ENCODE measurements at regions of chr12 and their contacts with region 1.

Region 1: DNA sequence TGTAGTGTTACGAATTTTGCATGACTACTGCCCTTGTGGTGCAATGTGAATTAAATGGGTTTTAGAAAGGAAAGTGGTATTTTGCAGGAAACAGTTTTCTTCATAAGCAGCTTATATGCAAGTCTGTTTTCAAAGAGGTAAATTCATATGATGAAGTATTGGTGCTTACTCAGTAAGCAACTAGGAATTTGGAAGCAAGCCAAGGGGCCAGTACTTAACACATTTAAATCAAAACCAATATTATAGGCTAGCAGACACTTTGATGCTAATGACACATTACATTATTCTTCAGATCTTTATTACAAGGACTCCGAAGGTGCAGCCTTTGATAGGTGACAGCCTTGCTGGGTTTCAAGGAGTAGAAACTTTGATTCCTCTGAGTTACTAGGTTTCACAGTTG is 23.1 kb downstream of the MGAT4C start:
- DNase-seq: peak; percentile 49
- H3K4me3 ChIP-seq: no peak overlapping the region
- H3K27ac ChIP-seq: no peak overlapping the region
- H3K4me1 ChIP-seq: peaks cover 32% of the 10 kb centered on the region
- H3K27me3 ChIP-seq: no peaks in the 10 kb centered on the region
- CTCF ChIP-seq: no peak
- POLR2A ChIP-seq: no peak

Region 2: GRCh38 chr12:85626001-85626781 is 606.9 kb before region 1 on chr12:
- CTCF ChIA-PET with region 1: no interaction called
- POLR2A ChIA-PET with region 1: no interaction called
- dilution Hi-C with region 1: no loop called
- intact Hi-C with region 1: loop called (anchors 2 kb)
- DNase-seq: peak; percentile 95
- H3K4me3 ChIP-seq: no peak overlapping the region
- H3K27ac ChIP-seq: peak overlapping the region; percentile 92
- H3K4me1 ChIP-seq: peaks cover 26% of the 10 kb centered on the region
- H3K27me3 ChIP-seq: no peaks in the 10 kb centered on the region
- CTCF ChIP-seq: no peak
- POLR2A ChIP-seq: peak; percentile 73

Region 3: GRCh38 chr12:85951823-85952222 is 281.3 kb before region 1 on chr12:
- CTCF ChIA-PET with region 1: no interaction called
- POLR2A ChIA-PET with region 1: no interaction called
- dilution Hi-C with region 1: no loop called
- intact Hi-C with region 1: loop called (anchors 1 kb)
- DNase-seq: peak; percentile 55
- H3K4me3 ChIP-seq: no peak overlapping the region
- H3K27ac ChIP-seq: no peak overlapping the region
- H3K4me1 ChIP-seq: peaks cover 4% of the 10 kb centered on the region
- H3K27me3 ChIP-seq: no peaks in the 10 kb centered on the region
- CTCF ChIP-seq: peak; percentile 17 to 25
- POLR2A ChIP-seq: no peak

Region 4: GRCh38 chr12:86193931-86194330 is 39.2 kb before region 1 on chr12:
- CTCF ChIA-PET with region 1: no interaction called
- POLR2A ChIA-PET with region 1: no interaction called
- dilution Hi-C with region 1: no loop called
- intact Hi-C with region 1: loop called (anchors 1 kb)
- DNase-seq: peak; percentile 59
- H3K4me3 ChIP-seq: no peak overlapping the region
- H3K27ac ChIP-seq: no peak overlapping the region
- H3K4me1 ChIP-seq: peaks cover 10% of the 10 kb centered on the region
- H3K27me3 ChIP-seq: no peaks in the 10 kb centered on the region
- CTCF ChIP-seq: no peak
- POLR2A ChIP-seq: no peak

Region 5: GRCh38 chr12:86249851-86250250 is 16.7 kb after region 1 on chr12:
- CTCF ChIA-PET with region 1: no interaction called
- POLR2A ChIA-PET with region 1: no interaction called
- dilution Hi-C with region 1: no loop called
- intact Hi-C with region 1: no loop called
- DNase-seq: no peak
- H3K4me3 ChIP-seq: no peak overlapping the region
- H3K27ac ChIP-seq: no peak overlapping the region
- H3K4me1 ChIP-seq: no peaks in the 10 kb centered on the region
- H3K27me3 ChIP-seq: no peaks in the 10 kb centered on the region
- CTCF ChIP-seq: no peak
- POLR2A ChIP-seq: no peak

Region 6: DNA sequence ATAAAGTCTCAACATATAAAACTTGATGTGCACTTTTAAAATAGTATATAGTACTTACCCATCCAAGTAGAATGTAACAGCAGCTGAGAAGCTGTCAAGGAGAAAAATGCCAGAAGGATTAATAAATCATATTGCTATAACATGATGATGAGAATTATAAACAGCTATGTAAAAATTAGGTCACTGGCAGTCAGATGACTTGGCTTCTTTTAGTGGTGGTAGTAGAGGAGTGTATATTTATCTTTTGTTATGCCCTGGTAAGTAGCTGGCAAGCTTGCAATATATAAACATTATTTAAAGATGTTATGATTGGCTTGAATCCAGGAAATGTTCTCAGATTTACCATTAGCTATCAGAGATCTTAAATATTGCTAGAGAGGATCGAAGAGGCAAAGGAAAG is 494.0 kb after region 1 on chr12:
- CTCF ChIA-PET with region 1: no interaction called
- POLR2A ChIA-PET with region 1: no interaction called
- dilution Hi-C with region 1: no loop called
- intact Hi-C with region 1: loop called (anchors 1 kb)
- DNase-seq: peak; percentile 87
- H3K4me3 ChIP-seq: no peak overlapping the region
- H3K27ac ChIP-seq: peak overlapping the region; percentile 3
- H3K4me1 ChIP-seq: peaks cover 8% of the 10 kb centered on the region
- H3K27me3 ChIP-seq: no peaks in the 10 kb centered on the region
- CTCF ChIP-seq: no peak
- POLR2A ChIP-seq: no peak

Region 7: DNA sequence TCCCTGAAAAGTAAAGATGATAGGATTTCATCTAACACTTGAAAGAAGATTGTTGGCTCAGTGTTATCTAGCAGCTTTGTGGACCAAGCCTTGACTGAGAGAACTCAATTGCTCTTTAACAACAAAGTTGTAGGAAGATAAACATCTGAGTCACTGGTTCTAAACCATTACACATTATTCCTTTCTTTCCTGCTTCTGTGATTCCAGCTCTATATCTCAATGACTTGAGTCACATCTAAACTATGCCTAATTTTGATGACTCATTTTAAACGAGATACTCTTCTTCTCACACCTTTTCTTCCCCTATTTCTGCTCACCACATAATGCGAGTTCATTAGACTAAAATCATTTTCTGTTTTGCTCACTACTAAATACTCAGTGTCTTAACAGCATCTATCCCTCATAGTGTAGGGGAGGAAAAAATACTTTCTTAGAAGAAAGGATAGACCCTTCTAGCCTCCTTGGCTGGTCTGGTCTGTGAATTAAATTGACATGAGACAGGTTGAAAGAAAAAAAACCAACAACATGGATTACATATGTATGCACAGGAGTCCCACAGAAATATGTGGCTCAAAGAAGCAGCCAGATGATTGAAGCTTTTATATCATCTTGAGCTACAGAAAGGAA is 1594.6 kb after region 1 on chr12:
- CTCF ChIA-PET with region 1: no interaction called
- POLR2A ChIA-PET with region 1: no interaction called
- dilution Hi-C with region 1: no loop called
- intact Hi-C with region 1: loop called (anchors 2 kb)
- DNase-seq: peak; percentile 89
- H3K4me3 ChIP-seq: peak overlapping the region in 1 of 3 experiments; percentile 18
- H3K27ac ChIP-seq: peak overlapping the region; percentile 83
- H3K4me1 ChIP-seq: peaks cover 25% of the 10 kb centered on the region
- H3K27me3 ChIP-seq: no peaks in the 10 kb centered on the region
- CTCF ChIP-seq: no peak
- POLR2A ChIP-seq: no peak